ENCODE measurements at regions of chr2 and their contacts with region 1.

Region 1: DNA sequence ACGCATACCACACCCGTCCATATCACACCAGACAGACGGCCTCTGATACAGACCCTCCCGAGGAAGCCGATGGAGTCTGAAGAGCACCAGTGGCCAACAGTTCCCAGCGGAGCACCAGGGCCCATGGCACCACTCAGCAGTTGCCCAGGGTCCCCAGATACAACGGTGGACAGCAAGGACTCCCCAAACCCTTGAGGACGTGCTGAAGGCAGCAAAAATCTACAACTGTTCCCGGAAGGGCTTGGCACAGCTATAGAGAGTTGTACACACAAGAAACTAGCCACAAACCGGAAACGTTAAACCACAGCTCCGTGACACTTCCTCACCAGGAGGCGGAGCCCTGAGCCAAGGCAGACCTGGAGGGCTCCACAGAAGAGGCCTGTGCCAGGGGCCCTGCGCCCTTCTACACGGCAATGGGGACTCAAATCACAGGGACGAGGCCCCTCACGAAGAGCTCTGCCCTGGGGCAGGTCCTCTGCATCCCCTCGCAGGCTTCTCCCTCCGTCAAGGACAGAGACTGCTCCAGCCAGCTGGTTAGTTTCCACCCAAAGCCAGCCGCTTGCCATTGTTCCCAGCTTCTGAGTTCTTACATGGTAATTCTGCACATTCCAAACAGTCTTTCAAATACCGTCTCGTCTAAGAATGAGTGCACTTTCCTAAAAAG is 133.4 kb downstream of the HDAC4 start:
- DNase-seq: peak; percentile 92
- H3K4me3 Mint-ChIP-seq: peak overlapping the region; percentile 84
- H3K27ac Mint-ChIP-seq: peak overlapping the region; percentile 89
- H3K4me1 Mint-ChIP-seq: peaks cover 83% of the 10 kb centered on the region
- H3K27me3 Mint-ChIP-seq: peaks cover 7% of the 10 kb centered on the region

Region 2: DNA sequence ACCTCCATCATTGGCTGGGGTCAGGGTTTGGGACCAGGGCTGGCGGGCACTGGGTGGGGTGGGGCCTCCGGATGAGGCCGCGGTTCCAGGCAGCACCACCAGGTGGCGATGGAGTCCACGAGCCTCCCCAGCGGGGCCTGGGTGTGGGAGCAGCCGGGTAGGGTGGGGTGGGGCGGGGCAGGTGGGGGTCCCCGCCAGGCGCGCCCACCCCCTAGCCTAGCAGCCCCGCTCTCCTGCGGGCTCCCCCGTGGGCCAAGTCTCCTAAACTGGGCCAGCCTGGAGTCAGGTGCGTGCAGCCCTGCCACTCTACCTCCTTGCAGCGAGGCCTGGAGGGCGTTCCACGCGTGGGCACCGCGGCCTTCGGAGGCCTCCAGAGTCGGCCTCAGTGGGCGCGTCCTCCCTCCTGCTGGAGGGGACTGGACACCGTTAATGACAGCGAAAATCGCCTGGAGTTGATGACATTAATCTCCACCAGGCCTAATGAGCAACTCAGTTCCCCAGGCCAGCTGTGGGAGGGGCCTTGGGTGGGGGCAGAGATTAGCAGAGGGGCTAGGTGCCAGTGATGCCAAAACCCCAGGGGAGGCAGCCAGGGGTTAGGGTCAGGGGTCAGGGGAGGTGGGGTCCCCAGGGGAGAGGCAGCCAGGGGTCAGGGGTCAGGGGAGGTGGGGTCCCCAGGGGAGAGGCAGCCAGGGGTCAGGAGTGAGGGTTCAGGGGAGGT is 231.9 kb before region 1 on chr2:
- intact Hi-C with region 1: loop called (anchors 10 kb)
- DNase-seq: peak; percentile 40
- H3K4me3 Mint-ChIP-seq: no peak overlapping the region
- H3K27ac Mint-ChIP-seq: no peak overlapping the region
- H3K4me1 Mint-ChIP-seq: no peaks in the 10 kb centered on the region
- H3K27me3 Mint-ChIP-seq: peaks cover 20% of the 10 kb centered on the region

Region 3: DNA sequence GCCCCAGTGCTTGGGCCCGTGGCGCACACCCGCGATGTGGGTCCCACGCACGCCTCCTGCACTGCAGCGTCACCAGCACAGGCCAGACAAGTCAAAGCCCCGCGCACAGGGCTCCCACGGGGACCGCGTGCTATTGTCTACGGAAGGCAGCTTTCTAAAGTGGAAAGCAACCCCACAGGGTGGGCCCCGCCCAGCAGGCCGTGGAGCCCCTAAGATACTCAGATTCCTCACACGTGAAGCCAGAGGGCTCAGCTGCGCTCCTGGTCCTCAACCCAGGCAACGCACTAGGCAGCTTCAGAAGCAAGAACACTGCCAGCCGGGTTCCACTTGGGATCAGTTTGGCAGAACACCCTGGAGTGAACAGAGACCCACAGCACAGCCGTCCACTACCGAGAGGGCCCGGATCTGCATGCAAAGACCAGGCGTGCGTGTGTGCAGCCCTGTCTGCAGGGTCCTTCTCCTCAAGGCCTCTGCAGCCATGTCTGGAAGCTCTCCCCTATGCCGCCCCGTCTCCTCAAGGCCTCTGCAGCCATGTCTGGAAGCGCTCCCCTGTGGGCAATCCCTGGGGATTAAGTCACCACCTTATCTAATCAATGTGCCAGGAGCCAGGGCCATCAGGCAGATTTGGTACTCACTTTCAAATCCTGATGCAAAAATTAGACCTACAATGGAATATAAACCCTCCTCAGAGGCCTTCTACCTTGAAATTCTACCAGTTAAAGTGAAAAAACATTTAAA is 97.9 kb before region 1 on chr2:
- intact Hi-C with region 1: loop called (anchors 2 kb)
- DNase-seq: no peak
- H3K4me3 Mint-ChIP-seq: no peak overlapping the region
- H3K27ac Mint-ChIP-seq: no peak overlapping the region
- H3K4me1 Mint-ChIP-seq: peaks cover 39% of the 10 kb centered on the region
- H3K27me3 Mint-ChIP-seq: no peaks in the 10 kb centered on the region

Region 4: DNA sequence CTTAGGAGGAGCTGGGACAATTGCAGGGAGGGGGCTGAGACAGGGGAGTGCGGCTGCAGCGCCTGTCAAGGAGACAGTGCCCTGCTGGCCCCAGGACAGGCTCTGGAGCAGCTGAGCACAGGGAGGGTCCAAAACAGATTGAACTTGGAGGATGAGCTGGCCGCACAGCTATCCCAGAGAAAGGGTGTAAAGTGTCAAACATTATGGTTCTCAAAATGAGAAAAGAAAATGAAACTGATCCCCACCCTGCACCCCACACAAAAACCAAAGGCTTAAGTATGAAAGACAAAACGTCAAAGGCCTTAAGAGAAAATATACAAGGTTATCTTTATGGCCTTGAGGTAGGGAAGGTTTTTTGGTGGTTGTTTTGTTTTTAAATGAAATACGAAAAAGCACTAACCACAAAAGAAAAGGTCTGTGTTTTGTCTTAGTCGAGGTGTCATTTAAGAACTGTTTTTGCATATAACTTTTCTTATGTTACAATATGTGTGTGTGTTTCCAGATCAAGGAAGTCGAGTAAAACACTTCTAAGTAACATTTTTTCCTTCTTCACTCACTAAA is 21.6 kb after region 1 on chr2:
- intact Hi-C with region 1: loop called (anchors 1 kb)
- DNase-seq: peak; percentile 61
- H3K4me3 Mint-ChIP-seq: peak overlapping the region; percentile 77
- H3K27ac Mint-ChIP-seq: peak overlapping the region; percentile 98
- H3K4me1 Mint-ChIP-seq: peaks cover 78% of the 10 kb centered on the region
- H3K27me3 Mint-ChIP-seq: peaks cover 7% of the 10 kb centered on the region

Region 5: DNA sequence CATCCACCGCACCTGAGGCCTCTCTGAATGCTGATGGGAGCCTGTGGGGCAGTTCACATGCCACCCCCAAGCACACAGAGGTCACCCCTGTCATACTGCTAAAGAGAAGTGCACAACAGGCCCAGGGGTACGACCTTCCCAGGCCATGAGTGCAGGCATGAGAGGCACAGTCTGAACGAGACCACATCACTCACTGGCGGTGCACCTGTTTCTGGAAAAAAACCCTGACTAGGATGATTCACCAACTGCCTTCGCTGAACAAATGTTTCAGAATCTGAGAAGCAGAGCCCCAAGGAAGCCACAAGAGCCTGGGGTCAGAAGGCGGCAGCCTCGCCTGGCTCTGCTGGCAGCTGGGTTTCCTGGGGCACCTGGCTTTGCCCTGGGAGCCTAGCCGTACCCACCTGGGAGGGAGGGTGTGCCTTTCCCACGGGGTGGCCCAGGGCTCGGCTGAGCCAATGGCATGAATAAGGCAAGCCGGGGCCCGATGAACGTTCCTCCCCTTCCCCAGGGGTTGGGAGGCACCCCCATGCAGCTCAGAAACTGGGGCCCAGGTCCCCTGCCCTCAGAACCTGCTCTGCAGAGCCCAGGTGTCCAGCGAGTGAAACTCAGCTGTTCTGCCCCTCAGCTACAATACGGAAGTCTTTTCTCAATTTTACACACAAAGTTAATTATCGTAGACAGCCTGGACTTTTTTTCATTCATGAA is 59.6 kb after region 1 on chr2:
- intact Hi-C with region 1: loop called (anchors 1 kb)
- DNase-seq: peak; percentile 74
- H3K4me3 Mint-ChIP-seq: peak overlapping the region; percentile 61
- H3K27ac Mint-ChIP-seq: peak overlapping the region; percentile 94
- H3K4me1 Mint-ChIP-seq: peaks cover 83% of the 10 kb centered on the region
- H3K27me3 Mint-ChIP-seq: no peaks in the 10 kb centered on the region

Region 6: DNA sequence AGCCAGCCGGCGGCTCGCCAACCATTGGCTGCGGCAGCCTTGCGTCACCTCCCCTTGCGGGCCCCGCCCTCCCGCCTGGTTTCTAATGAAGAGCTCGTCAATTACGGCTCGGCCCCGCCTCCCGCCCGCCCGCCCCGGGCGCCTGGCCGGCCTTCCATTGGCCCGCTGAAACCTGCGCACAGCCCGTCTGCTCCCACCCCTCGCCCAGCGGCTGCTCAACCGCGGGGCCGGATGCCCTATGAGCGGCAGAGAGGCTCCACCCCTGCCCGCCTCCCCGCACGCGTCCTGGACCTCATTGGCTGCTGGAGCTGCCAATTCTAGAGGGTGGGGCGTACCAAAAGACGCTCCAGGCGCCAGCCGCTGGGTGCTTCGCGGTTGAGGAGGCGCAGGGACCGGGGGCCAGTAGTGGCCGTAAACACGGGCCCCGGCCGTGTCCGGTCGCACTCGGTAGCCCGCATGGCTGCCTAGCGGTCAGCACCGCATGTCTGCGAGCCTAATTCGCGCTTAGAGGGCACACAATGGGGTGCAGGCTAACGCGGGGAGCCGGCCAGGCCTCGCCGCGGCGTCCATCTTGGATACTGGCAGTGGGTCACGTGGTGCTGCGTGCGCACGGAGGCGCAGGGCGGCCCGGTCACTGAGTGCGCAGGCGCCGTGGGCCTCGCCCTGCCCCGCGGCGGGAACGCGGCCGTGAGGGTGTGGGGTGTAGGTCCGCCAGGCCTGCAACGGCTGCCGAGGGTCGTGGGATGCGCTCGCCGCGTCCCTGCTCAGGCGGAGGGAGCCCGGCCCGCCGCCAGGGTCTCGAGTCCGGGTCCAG is 133.9 kb after region 1 on chr2:
- intact Hi-C with region 1: loop called (anchors 1 kb)
- DNase-seq: peak; percentile 99
- H3K4me3 Mint-ChIP-seq: peak overlapping the region; percentile 94
- H3K27ac Mint-ChIP-seq: peak overlapping the region; percentile 99
- H3K4me1 Mint-ChIP-seq: peaks cover 40% of the 10 kb centered on the region
- H3K27me3 Mint-ChIP-seq: peaks cover 17% of the 10 kb centered on the region

Region 7: GRCh38 chr2:240136013-240136670 is 868.7 kb after region 1 on chr2 and contains the start of gene COPS9:
- intact Hi-C with region 1: loop called (anchors 10 kb)
- DNase-seq: peak; percentile 85
- H3K4me3 Mint-ChIP-seq: peak within 1 kb of the TSS; percentile 92
- H3K27ac Mint-ChIP-seq: peak within 1 kb of the TSS; percentile 84
- H3K4me1 Mint-ChIP-seq: peaks cover 25% of the 10 kb centered on the region
- H3K27me3 Mint-ChIP-seq: peaks cover 6% of the 10 kb centered on the region
- total RNA-seq, gene COPS9: 127 and 132 TPM in 2 replicates